Mammary epithelial cell (primary cell): ENCODE measurements at regions of chr7 and their contacts with region 1.

Region 1: DNA sequence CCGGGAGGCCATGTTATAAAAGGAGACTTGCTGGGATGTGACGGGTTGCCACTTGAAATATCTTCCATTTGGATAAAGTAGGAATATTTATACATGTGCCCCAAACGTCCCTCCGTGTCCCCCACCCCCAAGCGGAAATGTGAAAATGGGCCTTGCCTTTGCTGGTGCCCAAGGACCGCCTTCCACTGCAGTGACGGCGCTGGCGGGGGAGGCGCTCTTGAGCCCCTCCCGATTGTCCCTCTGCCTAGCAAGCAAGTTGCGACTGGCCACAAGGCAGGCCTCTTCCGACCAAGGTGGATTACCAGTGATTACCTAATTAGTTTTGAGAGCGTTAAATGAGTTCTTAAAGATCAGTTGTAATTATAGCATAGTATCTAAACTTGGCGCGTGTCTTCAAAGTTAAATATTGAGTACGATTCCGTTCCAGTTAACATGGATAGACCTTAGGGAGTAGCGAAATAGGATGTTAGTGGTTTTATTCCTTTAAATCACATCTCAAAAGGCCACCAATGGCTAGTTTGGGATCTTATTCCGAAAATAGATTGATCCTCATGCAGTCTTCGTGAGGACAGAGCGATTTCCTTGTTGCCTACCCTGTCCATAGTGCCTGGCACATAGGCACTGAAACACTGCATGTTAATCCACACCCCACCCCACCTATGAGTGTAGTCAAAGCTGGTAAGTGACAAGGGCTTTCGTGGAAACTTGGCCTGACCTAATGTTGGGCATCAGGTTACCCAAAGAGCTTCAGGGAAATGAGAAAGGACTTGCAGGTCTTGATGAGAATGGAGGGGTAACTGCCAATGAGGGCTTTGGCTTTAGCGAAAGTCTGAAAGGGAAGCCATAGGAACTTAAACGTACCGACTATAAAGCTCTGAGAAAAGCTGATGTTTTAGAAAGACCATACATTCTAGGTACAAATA is 1.1 kb downstream of the PPIA start:
- DNase-seq: peak; percentile 90
- H3K4me3 ChIP-seq: peak overlapping the region; percentile 92 to 95 (median 95)
- H3K27ac ChIP-seq: peak overlapping the region; percentile 100
- H3K4me1 ChIP-seq: peaks cover 35% of the 10 kb centered on the region
- H3K27me3 ChIP-seq: no peaks in the 10 kb centered on the region
- CTCF ChIP-seq: peak; percentile 3 to 36

Region 2: DNA sequence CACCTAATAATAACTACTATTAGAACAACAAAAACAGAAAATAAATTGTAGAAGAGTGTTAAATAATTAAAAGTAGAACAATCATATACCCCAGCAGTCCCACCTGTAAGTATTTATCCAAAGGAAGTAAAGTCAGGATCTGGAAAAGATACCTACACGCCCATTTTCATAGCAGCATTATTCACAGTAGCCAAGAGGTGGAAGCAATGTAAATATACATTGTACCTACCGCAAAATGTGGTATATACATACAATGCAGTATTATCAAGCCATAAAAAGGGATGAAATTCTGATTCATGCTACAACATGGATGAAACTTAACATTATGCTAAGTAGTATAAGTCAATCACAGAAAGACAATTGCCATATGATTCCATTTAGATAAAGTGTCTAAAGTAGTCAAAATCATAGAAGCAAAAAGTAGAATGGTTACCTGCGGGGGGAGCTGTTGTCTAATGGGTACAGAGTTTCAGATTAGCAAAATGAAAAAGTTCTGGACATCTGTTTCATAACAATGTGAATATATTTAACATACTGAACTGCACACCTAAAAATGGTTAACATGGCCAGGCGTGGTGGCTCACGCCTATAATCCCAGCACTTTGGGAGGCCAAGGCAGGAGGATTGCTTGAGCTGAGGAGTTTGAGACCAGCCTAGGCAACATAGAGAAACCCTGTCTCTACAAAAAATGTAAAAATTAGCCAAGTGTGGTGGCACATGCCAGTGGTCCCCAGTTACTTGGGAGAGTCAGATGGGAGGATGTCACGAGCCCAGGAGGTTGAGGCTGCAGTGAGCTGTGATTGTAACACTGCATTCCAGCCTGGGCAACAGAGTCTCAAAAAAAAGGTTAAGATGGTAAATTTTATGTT is 209.5 kb before region 1 on chr7:
- CTCF ChIA-PET with region 1: no interaction called
- dilution Hi-C with region 1: no loop called
- in situ Hi-C with region 1: no loop called
- intact Hi-C with region 1: loop called (anchors 1 kb)
- DNase-seq: peak; percentile 51
- H3K4me3 ChIP-seq: no peak overlapping the region
- H3K27ac ChIP-seq: no peak overlapping the region
- H3K4me1 ChIP-seq: peaks cover under 1% of the 10 kb centered on the region
- H3K27me3 ChIP-seq: no peaks in the 10 kb centered on the region
- CTCF ChIP-seq: peak; percentile 54 to 71

Region 3: DNA sequence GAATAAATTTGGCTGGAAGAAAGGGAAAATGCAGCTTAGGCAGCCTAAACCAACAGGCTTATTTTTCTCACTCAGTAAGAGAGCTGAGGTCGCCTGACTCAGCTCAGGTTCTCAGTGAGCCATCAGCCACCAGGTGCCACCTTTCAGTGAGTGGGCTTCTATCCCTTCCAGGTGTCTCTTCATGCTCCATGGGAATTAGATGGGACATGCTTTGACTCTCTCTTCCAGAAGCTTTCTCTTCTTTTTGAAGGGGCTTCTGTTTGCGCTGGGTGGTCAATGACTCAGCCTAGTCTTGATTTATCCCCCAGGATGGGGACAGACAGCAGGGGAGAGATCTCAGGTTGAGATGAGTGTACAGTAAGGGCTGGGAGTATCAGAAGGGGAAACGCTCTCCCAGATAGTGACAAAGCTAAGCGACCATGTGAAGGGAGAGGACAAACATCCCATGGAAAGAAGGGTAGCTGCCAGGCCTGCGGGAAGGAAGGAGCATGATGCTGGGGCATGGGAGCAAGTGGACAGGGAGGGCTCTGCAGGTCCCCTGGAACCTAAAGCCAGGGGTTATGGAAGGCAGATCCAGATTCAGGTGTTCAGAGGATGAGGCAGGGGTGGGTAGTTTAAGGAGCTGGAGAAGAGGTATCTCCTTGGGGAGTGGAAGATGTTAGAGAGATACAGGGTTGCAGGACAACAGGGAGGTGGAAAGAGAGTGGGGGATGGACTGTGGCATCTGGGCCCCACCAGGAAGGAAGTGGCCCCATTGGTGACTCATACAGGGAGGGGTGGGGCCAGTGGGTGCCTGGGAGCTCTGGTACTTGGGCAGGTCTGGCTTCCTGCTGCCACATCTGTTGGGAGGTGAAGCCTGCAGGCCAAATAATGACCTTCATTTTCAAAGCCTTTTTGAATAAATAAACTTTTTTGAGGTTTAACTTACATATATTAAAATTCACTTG is 158.7 kb before region 1 on chr7:
- CTCF ChIA-PET with region 1: interaction called, 3 read pairs
- dilution Hi-C with region 1: no loop called
- in situ Hi-C with region 1: no loop called
- intact Hi-C with region 1: loop called (anchors 1 kb)
- DNase-seq: peak; percentile 89
- H3K4me3 ChIP-seq: no peak overlapping the region
- H3K27ac ChIP-seq: peak overlapping the region; percentile 98
- H3K4me1 ChIP-seq: peaks cover 47% of the 10 kb centered on the region
- H3K27me3 ChIP-seq: no peaks in the 10 kb centered on the region
- CTCF ChIP-seq: peak in 1 of 2 donors; percentile 15

Region 4: DNA sequence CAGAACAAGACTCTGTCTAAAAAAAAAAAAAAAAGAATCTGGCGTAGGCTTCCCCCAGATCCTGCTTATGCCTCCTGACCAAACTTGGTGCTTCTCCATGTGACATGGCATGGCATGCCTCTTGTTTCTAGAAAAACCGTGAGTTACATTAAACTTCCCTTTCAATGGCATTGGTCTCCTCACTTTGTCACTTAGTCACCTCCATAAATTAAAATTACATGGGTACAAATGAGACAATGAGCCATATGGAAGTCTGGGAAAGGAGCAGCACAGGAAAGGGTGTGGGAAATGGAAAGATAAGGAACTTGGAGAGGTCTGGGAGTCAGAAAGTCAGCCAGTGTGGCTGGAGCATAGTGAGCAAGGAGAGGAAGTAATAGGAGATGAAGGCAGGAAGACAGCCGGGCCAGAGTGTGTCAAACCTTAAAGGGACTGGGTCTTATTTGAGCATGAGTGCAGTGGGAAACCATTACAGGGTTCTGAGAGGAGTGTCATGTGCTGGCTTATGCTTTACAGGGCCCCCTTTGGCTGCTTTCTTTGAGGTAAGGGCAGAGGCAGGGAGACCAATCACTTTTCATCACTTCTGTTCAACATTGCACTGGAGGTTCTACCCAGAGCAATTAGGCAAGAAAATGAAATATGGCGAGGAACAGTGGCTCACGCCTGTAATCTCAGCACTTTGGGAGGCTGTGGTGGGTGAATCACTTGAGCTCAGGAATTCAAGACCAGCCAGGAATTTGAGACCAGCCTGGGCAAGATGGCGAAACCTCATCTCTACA is 70.2 kb before region 1 on chr7:
- CTCF ChIA-PET with region 1: no interaction called
- dilution Hi-C with region 1: loop called (anchors 5 kb)
- in situ Hi-C with region 1: no loop called
- intact Hi-C with region 1: loop called (anchors 5 kb)
- DNase-seq: peak; percentile 77
- H3K4me3 ChIP-seq: no peak overlapping the region
- H3K27ac ChIP-seq: peak overlapping the region; percentile 42
- H3K4me1 ChIP-seq: peaks cover 13% of the 10 kb centered on the region
- H3K27me3 ChIP-seq: no peaks in the 10 kb centered on the region
- CTCF ChIP-seq: no peak

Region 5: DNA sequence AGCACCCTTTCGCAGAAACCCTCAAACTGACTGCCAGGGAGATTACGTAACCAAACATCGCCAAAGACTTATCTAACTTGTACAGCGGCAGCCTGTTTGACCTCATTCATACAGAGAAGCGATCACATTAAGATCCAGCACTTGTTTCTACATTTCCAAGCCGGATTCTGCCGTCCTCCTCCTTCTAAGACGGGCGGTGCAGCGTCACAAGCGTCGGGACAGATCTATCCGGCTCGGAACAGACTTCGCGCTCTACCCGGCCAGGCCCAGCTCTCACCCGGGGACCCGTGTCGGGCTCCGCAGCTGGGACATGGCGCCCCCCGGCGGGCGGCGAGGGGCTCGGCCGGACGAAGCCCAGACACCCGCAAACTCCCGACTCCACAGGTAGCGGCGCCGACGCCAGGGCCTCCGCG is 49.9 kb after region 1 on chr7:
- CTCF ChIA-PET with region 1: no interaction called
- dilution Hi-C with region 1: no loop called
- in situ Hi-C with region 1: no loop called
- intact Hi-C with region 1: loop called (anchors 1 kb)
- DNase-seq: peak; percentile 83
- H3K4me3 ChIP-seq: peak overlapping the region; percentile 55 to 96 (median 94)
- H3K27ac ChIP-seq: peak overlapping the region; percentile 84
- H3K4me1 ChIP-seq: peaks cover 5% of the 10 kb centered on the region
- H3K27me3 ChIP-seq: no peaks in the 10 kb centered on the region
- CTCF ChIP-seq: peak; percentile 47 to 96

Region 6: DNA sequence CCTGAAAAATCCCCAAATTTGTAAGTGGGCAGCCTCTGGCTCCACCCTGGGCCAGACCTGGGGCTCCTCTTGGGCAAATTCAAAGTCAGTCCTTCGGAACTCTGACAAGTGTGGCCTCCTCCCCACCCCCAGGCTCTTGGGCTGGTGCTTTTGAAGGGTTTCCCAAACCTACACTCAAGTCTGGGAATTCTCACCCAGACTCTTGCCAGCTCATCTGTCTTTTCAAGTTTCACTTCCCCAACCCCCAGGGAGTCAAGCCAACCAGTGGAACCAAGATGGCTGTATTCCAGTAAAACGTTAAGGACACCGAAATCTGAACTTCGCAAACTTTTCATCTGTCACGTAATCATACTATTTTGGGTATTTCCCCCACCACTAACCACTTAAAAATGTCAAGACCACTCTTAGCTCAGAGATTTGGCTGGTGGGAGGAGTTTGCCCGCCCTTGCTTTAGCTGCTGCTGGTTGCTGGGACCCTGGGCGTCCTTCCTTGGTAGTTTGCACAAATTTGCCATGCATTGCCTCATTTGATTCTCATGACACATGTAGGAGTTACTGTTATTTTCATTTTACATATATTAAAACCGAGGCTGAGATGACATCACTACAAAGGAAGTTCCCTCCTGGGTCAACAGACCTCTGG is 182.9 kb after region 1 on chr7:
- CTCF ChIA-PET with region 1: no interaction called
- dilution Hi-C with region 1: no loop called
- in situ Hi-C with region 1: no loop called
- intact Hi-C with region 1: no loop called
- DNase-seq: no peak
- H3K4me3 ChIP-seq: no peak overlapping the region
- H3K27ac ChIP-seq: no peak overlapping the region
- H3K4me1 ChIP-seq: peaks cover 18% of the 10 kb centered on the region
- H3K27me3 ChIP-seq: no peaks in the 10 kb centered on the region
- CTCF ChIP-seq: no peak

Region 7: DNA sequence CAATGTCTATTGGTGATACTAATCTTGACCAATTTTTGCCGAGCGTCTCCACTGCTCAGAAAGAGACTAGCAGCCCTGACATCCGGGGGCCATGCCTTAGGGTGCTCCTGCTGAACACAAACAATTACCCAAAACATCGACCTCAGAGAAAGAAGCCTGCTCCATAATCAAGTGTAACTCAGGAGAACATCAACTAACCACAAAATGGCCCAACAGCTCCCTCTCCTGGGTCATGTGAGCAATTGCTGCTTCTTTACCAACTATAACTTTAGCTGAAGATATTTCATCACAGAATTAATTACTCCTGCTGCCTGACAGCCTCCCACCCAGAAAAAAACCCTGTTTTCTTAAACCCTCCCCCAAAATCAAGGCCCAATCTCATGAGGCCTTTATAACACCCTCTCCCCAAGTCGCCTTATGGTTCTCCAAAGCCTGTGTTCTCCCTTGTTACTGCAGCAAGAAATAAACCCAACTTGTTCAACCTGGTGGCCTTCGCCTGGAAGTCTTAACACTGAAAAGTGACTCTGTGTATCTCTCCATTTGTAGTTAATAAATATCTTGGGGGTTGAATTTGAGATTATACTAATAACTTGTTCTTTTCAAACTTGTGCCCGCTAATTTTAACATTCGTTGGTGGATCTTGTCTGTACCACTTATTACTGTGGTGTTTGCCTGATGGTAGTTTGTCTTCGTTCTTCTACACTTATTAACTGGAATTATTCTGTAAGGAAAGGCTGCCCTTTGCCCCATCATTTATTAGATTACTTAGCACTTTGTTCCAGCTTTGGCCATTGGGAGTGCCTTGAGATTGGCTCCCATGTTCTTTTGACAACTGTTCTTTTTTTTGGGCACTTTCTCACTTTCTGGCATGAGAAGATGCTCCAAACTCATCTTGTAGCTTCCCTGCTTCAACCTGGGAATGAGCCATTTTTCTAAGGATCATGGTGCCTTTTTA is 338.8 kb after region 1 on chr7:
- CTCF ChIA-PET with region 1: no interaction called
- dilution Hi-C with region 1: no loop called
- in situ Hi-C with region 1: no loop called
- intact Hi-C with region 1: loop called (anchors 5 kb)
- DNase-seq: peak; percentile 53
- H3K4me3 ChIP-seq: no peak overlapping the region
- H3K27ac ChIP-seq: no peak overlapping the region
- H3K4me1 ChIP-seq: no peaks in the 10 kb centered on the region
- H3K27me3 ChIP-seq: no peaks in the 10 kb centered on the region
- CTCF ChIP-seq: peak; percentile 86 to 92